ENCODE measurements at regions of chr3 and their contacts with region 1.

Region 1: GRCh38 chr3:139111392-139112229 is 66.9 kb upstream of the PRR23C start:
- DNase-seq: peak; percentile 41
- H3K4me3 ChIP-seq: no peak overlapping the region
- H3K27ac ChIP-seq: no peak overlapping the region
- H3K27me3 ChIP-seq: peaks cover 25% of the 10 kb centered on the region
- CTCF ChIP-seq: peak; percentile 92

Region 2: DNA sequence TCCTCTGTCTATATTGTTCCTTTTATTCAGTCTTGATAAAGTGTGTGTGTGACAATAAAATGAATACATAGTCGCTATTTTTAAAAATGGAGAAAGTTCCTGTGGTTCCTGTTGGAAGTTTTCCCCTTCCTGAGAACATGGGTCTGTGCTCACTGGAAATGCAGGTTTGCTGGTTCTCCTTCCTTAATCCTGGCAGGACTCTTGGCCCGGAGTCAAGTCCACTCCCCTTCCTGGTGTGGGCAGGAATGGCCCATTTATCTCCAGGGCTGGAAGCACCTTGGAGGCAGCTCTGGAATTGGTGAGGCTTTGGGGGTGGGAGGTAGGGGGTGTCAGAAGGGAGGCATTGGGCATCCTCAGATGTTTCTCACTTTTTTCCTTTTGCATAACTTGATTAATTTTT is 194.8 kb before region 1 on chr3:
- CTCF ChIA-PET with region 1: no interaction called
- POLR2A ChIA-PET with region 1: no interaction called
- DNase-seq: no peak
- H3K4me3 ChIP-seq: no peak overlapping the region
- H3K27ac ChIP-seq: no peak overlapping the region
- H3K27me3 ChIP-seq: no peaks in the 10 kb centered on the region
- CTCF ChIP-seq: no peak

Region 3: GRCh38 chr3:139140553-139140952 is 28.9 kb after region 1 on chr3:
- CTCF ChIA-PET with region 1: interaction called, 11 read pairs
- POLR2A ChIA-PET with region 1: no interaction called
- DNase-seq: no peak
- H3K4me3 ChIP-seq: no peak overlapping the region
- H3K27ac ChIP-seq: no peak overlapping the region
- H3K27me3 ChIP-seq: no peaks in the 10 kb centered on the region
- CTCF ChIP-seq: no peak

Region 4: GRCh38 chr3:139310474-139310933 is 198.9 kb after region 1 on chr3:
- CTCF ChIA-PET with region 1: interaction called, 33 read pairs
- POLR2A ChIA-PET with region 1: no interaction called
- DNase-seq: peak; percentile 72
- H3K4me3 ChIP-seq: no peak overlapping the region
- H3K27ac ChIP-seq: peak overlapping the region; percentile 87
- H3K27me3 ChIP-seq: no peaks in the 10 kb centered on the region
- CTCF ChIP-seq: no peak

Region 5: GRCh38 chr3:139329345-139329850 is 217.8 kb after region 1 on chr3:
- CTCF ChIA-PET with region 1: interaction called, 140 read pairs
- POLR2A ChIA-PET with region 1: no interaction called
- DNase-seq: no peak
- H3K4me3 ChIP-seq: 0 out of 2 replicates have a peak overlapping the region, but pooled peaks have one; percentile 20
- H3K27ac ChIP-seq: no peak overlapping the region
- H3K27me3 ChIP-seq: peaks cover 10% of the 10 kb centered on the region
- CTCF ChIP-seq: peak; percentile 100

Region 6: DNA sequence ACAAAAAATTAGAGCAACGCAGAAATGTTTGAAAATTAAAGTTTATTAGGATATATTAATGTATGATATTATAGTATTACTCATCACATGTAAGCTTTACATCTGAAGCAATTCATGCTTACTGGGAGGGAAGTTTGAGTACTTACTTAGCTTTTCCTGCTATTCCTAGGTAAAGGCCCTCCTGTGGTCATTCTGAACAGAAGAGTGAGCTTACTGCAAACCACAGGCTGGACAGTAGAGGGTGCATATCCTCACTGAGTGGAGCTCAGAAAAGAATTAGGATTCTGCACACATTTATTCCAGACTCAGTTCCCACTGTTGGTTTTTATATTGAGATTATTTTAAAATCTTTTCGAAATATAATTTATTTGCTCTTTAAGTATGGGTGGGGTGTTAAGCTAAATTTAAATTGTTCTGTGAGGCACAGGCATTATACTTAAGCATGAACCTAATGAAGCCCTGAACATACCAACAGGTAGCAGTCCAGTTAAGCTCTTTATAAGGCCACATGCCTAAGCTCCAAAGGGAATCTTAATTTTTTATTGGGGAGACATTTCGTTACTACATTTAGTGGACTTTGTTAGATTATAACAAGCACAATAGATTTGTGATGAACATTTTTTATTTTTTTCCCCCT is 242.4 kb after region 1 on chr3:
- CTCF ChIA-PET with region 1: interaction called, 14 read pairs
- POLR2A ChIA-PET with region 1: interaction called, 3 read pairs
- DNase-seq: peak; percentile 29
- H3K4me3 ChIP-seq: no peak overlapping the region
- H3K27ac ChIP-seq: no peak overlapping the region
- H3K27me3 ChIP-seq: no peaks in the 10 kb centered on the region
- CTCF ChIP-seq: peak; percentile 94

Region 7: GRCh38 chr3:139689122-139689521 is 577.5 kb after region 1 on chr3:
- CTCF ChIA-PET with region 1: no interaction called
- POLR2A ChIA-PET with region 1: no interaction called
- DNase-seq: no peak
- H3K4me3 ChIP-seq: no peak overlapping the region
- H3K27ac ChIP-seq: no peak overlapping the region
- H3K27me3 ChIP-seq: no peaks in the 10 kb centered on the region
- CTCF ChIP-seq: no peak

Measured in AG04450 (cell line).